ENCODE measurements at regions of chr6 and their contacts with region 1.

Region 1: GRCh38 chr6:24720604-24721460 is 1.9 kb upstream of the C6orf62 start:
- DNase-seq: peak; percentile 99
- ATAC-seq: peak; percentile 93
- H3K4me3 ChIP-seq: peak overlapping the region; percentile 92 to 96
- H3K27ac ChIP-seq: peak overlapping the region; percentile 95
- H3K4me1 ChIP-seq: peaks cover 16 to 30% of the 10 kb centered on the region in 2 experiments; a peak in 3 of 4 replicates
- H3K27me3 ChIP-seq: no peaks in the 10 kb centered on the region
- CTCF ChIP-seq: no peak
- POLR2A ChIP-seq: peak; percentile 79
- RAD21 ChIP-seq: no peak

Region 2: DNA sequence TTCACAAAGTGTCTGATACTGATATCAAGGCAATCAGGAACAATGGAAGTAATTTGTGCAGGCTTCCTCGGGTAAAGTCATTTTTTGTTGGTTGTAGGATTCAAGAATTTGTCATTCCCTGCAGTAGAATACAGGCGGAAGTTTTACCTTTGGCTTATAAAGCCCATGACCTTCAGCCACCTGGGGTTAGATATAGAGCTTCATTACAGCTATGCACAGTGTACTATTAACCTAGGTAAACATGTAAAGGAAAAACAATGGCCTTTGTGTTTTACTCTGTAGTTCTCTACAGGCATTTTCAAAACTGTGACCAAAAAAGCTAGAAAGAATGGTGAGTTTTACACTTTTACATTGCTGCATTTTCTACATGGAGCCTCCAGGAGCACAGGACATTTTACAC is 479.9 kb before region 1 on chr6:
- CTCF ChIA-PET with region 1: no interaction called
- POLR2A ChIA-PET with region 1: no interaction called
- RAD21 ChIA-PET with region 1: no interaction called
- intact Hi-C with region 1: no loop called
- DNase-seq: no peak
- ATAC-seq: no peak
- H3K4me3 ChIP-seq: no peak overlapping the region
- H3K27ac ChIP-seq: no peak overlapping the region
- H3K4me1 ChIP-seq: no peaks in the 10 kb centered on the region
- H3K27me3 ChIP-seq: no peaks in the 10 kb centered on the region
- CTCF ChIP-seq: no peak
- POLR2A ChIP-seq: no peak
- RAD21 ChIP-seq: no peak

Region 3: GRCh38 chr6:24743265-24743943 is 22.6 kb after region 1 on chr6:
- CTCF ChIA-PET with region 1: no interaction called
- POLR2A ChIA-PET with region 1: interaction called, 5 read pairs
- RAD21 ChIA-PET with region 1: no interaction called
- intact Hi-C with region 1: loop called (anchors 1 kb)
- DNase-seq: peak; percentile 76
- ATAC-seq: peak; percentile 88
- H3K4me3 ChIP-seq: peak overlapping the region; percentile 6 to 36; a peak in 3 of 4 replicates
- H3K27ac ChIP-seq: peak overlapping the region; percentile 59
- H3K4me1 ChIP-seq: peaks cover 3 to 22% of the 10 kb centered on the region in 2 experiments; a peak in 3 of 4 replicates
- H3K27me3 ChIP-seq: no peaks in the 10 kb centered on the region
- CTCF ChIP-seq: no peak
- POLR2A ChIP-seq: no peak
- RAD21 ChIP-seq: no peak

Region 4: GRCh38 chr6:24766680-24767462 is 46.0 kb after region 1 on chr6:
- CTCF ChIA-PET with region 1: no interaction called
- POLR2A ChIA-PET with region 1: no interaction called
- RAD21 ChIA-PET with region 1: no interaction called
- intact Hi-C with region 1: loop called (anchors 5 kb)
- DNase-seq: no peak
- ATAC-seq: peak; percentile 71
- H3K4me3 ChIP-seq: no peak overlapping the region
- H3K27ac ChIP-seq: no peak overlapping the region
- H3K4me1 ChIP-seq: 0 out of 4 replicates have a peak, but pooled peaks cover 0 to 2% of the 10 kb centered on the region in 2 experiments
- H3K27me3 ChIP-seq: no peaks in the 10 kb centered on the region
- CTCF ChIP-seq: peak; percentile 28 to 71 (median 65); a peak in 5 of 6 replicates
- POLR2A ChIP-seq: no peak
- RAD21 ChIP-seq: peak; percentile 82

Measured in HCT116 (cell line).